ENCODE measurements at regions of chr5 and their contacts with region 1.

Region 1: GRCh38 chr5:91225848-91226686 is 157.1 kb downstream of the ARRDC3 start:
- DNase-seq: peak in 4 of 5 donors; percentile 43 to 62 (median 47)
- H3K4me3 ChIP-seq: no peak overlapping the region
- H3K27ac ChIP-seq: no peak overlapping the region
- H3K4me1 ChIP-seq: peaks cover 0 to 6% (median 0%) of the 10 kb centered on the region in 3 donors
- H3K27me3 ChIP-seq: no peaks in the 10 kb centered on the region
- CTCF ChIP-seq: peak; percentile 53

Region 2: DNA sequence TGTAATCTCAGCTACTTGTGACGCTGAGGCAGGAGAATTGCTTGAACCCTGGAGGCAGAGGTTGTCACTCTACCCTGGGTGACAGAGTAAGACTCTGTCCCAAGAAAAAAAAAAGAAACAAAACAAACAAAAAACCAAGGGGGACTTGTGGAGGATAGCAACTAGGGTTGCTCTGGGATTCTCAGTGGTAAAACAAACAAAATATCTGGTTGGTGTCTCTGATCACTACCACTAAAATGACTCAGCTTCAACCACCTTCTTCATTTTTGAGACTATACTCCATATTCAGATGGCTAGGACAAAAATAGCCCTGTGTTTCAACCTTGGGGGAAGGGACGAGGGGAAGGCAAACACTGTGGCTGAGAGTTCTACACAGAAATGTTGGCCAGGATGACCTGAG is 46.8 kb after region 1 on chr5:
- intact Hi-C with region 1: loop called (anchors 10 kb)
- DNase-seq: no peak
- H3K4me3 ChIP-seq: no peak overlapping the region
- H3K27ac ChIP-seq: no peak overlapping the region
- H3K4me1 ChIP-seq: no peaks in the 10 kb centered on the region
- H3K27me3 ChIP-seq: no peaks in the 10 kb centered on the region
- CTCF ChIP-seq: no peak